Caco-2 (cell line): ENCODE measurements at regions of chr1 and their contacts with region 1.

Region 1: GRCh38 chr1:109483672-109484518 is at the start of gene ATXN7L2:
- DNase-seq: peak; percentile 89
- H3K4me3 ChIP-seq: peak within 1 kb of the TSS; percentile 81
- H3K4me3 Mint-ChIP-seq: peak within 1 kb of the TSS; percentile 94
- H3K27ac Mint-ChIP-seq: peak within 1 kb of the TSS; percentile 88
- H3K4me1 ChIP-seq: peaks cover 5% of the 10 kb centered on the region; the same call in 1 of the 2 replicates
- H3K4me1 Mint-ChIP-seq: no peaks in the 10 kb centered on the region
- H3K27me3 ChIP-seq: no peaks in the 10 kb centered on the region
- H3K27me3 Mint-ChIP-seq: peaks cover 7% of the 10 kb centered on the region
- CTCF ChIP-seq: no peak
- total RNA-seq, gene ATXN7L2: 3.9 and 4.0 TPM in 2 replicates

Region 2: DNA sequence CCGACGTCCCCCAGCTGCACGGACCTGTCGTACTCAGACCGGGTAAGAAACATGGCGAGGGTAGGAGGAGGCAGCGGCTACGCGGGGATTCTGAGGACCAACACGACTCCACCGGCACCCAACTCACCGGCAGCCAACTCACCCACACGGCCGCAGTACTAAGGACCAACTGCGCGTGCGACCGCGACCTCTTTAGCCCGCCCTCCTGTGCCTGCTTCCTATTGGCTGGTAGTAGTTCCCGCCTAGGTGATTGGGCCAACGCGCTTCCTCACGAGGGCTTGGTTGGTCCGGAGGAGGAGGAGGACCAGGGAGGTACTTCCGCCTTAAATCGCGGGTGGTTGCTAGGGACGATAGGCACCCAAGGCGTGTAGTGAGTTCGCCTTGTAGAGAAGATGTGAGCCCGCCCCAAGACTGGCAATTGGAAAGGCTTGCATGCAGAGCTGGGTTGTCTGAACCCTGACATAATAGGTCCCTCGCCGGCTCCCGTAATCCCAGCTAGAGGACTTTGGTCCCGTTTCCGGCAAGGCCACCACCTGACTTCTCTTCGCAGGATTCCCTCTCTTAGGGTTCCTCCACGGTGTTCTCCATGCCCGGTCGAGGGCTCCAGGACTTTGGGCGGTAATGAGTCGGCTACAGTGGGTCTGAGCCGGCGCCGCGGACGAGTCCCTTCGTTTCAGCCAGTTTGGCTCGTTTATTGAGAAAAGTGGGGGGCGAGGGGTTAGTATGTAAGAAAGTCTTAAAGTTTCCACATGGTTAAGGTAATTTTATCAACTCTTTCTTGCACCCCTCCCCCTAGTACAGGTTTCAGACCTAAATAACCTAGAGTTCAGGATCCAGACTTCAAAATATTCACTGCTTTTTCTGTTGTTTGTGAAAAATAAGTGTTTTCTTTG is 57.4 kb before region 1 on chr1 and contains the start of gene PSMA5:
- CTCF ChIA-PET with region 1: no interaction called
- POLR2A ChIA-PET with region 1: interaction called, 7 read pairs
- intact Hi-C with region 1: loop called (anchors 5 kb)
- DNase-seq: peak; percentile 92 to 98
- H3K4me3 ChIP-seq: peak within 1 kb of the TSS; percentile 61
- H3K4me3 Mint-ChIP-seq: peak within 1 kb of the TSS; percentile 90
- H3K27ac Mint-ChIP-seq: peak within 1 kb of the TSS; percentile 95
- H3K4me1 ChIP-seq: peaks cover 14% of the 10 kb centered on the region
- H3K4me1 Mint-ChIP-seq: peaks cover 14% of the 10 kb centered on the region
- H3K27me3 ChIP-seq: no peaks in the 10 kb centered on the region
- H3K27me3 Mint-ChIP-seq: no peaks in the 10 kb centered on the region
- CTCF ChIP-seq: no peak
- total RNA-seq, gene PSMA5: 82.7 and 97.8 TPM in 2 replicates

Region 3: GRCh38 chr1:109509176-109510134 is 25.6 kb after region 1 on chr1 and contains the start of gene AMIGO1:
- CTCF ChIA-PET with region 1: no interaction called
- POLR2A ChIA-PET with region 1: interaction called, 12 read pairs
- intact Hi-C with region 1: no loop called
- DNase-seq: peak in 1 of 2 experiments; percentile 61
- H3K4me3 ChIP-seq: peak within 1 kb of the TSS; percentile 45
- H3K4me3 Mint-ChIP-seq: peak within 1 kb of the TSS; percentile 76
- H3K27ac Mint-ChIP-seq: peak within 1 kb of the TSS; percentile 30
- H3K4me1 ChIP-seq: no peaks in the 10 kb centered on the region
- H3K4me1 Mint-ChIP-seq: peaks cover 6% of the 10 kb centered on the region
- H3K27me3 ChIP-seq: no peaks in the 10 kb centered on the region
- H3K27me3 Mint-ChIP-seq: peaks cover 10% of the 10 kb centered on the region
- CTCF ChIP-seq: no peak
- total RNA-seq, gene AMIGO1: 1.1 and 1.5 TPM in 2 replicates